Activated B cell treated with CpG ODN at 0.5 μM for 24 hours (primary cell): ENCODE measurements at regions of chr17 and their contacts with region 1.

Region 1: GRCh38 chr17:29640413-29640812 is 17.7 kb upstream of the CORO6 start:
- DNase-seq: no peak
- ATAC-seq: no peak
- H3K4me3 Mint-ChIP-seq: no peak overlapping the region
- H3K27ac Mint-ChIP-seq: peak overlapping the region; percentile 89
- H3K4me1 Mint-ChIP-seq: peaks cover 32% of the 10 kb centered on the region
- H3K27me3 Mint-ChIP-seq: no peaks in the 10 kb centered on the region
- CTCF ChIP-seq: no peak

Region 2: DNA sequence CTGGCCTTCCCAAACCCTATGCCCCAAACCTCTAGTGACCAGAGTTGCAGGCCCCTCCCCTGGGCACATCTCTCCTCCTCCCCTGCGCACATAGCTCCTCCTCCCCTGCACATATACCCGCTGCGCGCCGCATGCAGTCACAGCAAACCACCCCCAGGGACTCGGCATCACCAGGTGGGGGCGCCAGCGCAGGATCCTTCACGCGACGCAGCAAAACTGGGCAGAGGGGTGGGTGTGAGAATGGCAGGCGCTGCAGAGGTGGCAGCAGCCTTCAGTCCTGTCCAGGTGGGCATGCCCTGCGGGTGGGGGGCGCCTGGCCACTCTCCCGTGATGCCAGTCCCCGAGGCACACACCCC is 23.3 kb before region 1 on chr17:
- CTCF ChIA-PET with region 1: interaction called, 19 read pairs
- POLR2A ChIA-PET with region 1: interaction called, 11 read pairs
- intact Hi-C with region 1: loop called (anchors 2 kb)
- DNase-seq: peak; percentile 75
- ATAC-seq: peak; percentile 79
- H3K4me3 Mint-ChIP-seq: peak overlapping the region; percentile 83
- H3K27ac Mint-ChIP-seq: peak overlapping the region; percentile 72
- H3K4me1 Mint-ChIP-seq: peaks cover 46% of the 10 kb centered on the region
- H3K27me3 Mint-ChIP-seq: peaks cover 3% of the 10 kb centered on the region
- CTCF ChIP-seq: no peak

Region 3: GRCh38 chr17:29777663-29778062 is 137.2 kb after region 1 on chr17:
- CTCF ChIA-PET with region 1: interaction called, 173 read pairs
- POLR2A ChIA-PET with region 1: interaction called, 18 read pairs
- intact Hi-C with region 1: loop called (anchors 1 kb)
- DNase-seq: no peak
- ATAC-seq: no peak
- H3K4me3 Mint-ChIP-seq: no peak overlapping the region
- H3K27ac Mint-ChIP-seq: no peak overlapping the region
- H3K4me1 Mint-ChIP-seq: peaks cover 14% of the 10 kb centered on the region
- H3K27me3 Mint-ChIP-seq: no peaks in the 10 kb centered on the region
- CTCF ChIP-seq: no peak

Region 4: GRCh38 chr17:29807520-29808351 is 167.3 kb after region 1 on chr17:
- CTCF ChIA-PET with region 1: interaction called, 37 read pairs
- POLR2A ChIA-PET with region 1: interaction called, 3 read pairs
- intact Hi-C with region 1: loop called (anchors 1 kb)
- DNase-seq: peak; percentile 23
- ATAC-seq: peak; percentile 83
- H3K4me3 Mint-ChIP-seq: peak overlapping the region; percentile 49
- H3K27ac Mint-ChIP-seq: no peak overlapping the region
- H3K4me1 Mint-ChIP-seq: peaks cover 29% of the 10 kb centered on the region
- H3K27me3 Mint-ChIP-seq: no peaks in the 10 kb centered on the region
- CTCF ChIP-seq: peak; percentile 49

Region 5: DNA sequence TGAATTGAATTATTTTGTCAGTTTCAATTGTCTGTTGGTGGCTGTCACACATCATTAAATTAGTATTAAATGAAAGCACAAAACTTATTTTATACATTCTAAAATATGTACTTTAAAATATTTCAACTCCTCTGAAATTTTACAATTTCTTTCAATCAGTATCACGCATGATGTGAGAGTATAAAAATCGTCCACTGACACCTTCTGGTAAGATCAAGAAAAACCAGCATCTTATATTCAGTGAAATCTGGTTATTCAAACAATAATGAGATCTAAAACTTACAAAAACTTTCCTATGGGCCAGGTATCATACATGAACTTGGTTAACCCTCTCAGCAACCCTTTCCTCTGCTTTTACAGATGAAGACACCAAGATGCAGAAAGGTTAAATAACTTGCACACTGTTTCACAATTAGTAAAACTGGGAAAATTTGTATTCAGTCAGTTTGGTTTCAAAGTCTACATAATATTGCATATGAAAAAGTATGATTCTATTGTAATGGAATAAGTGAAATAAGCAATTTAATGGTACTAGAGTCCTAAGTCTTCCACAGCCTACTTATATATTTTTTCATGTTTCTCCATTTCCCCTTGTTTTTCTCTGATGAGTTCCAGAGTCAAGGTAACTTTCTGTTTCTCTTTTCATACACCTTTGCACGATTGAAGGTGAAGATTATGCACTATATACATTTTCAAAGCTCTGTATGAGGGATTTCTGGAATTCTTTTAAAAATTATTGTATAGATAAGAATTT is 359.8 kb after region 1 on chr17:
- CTCF ChIA-PET with region 1: no interaction called
- POLR2A ChIA-PET with region 1: no interaction called
- intact Hi-C with region 1: loop called (anchors 5 kb)
- DNase-seq: no peak
- ATAC-seq: no peak
- H3K4me3 Mint-ChIP-seq: no peak overlapping the region
- H3K27ac Mint-ChIP-seq: no peak overlapping the region
- H3K4me1 Mint-ChIP-seq: no peaks in the 10 kb centered on the region
- H3K27me3 Mint-ChIP-seq: no peaks in the 10 kb centered on the region
- CTCF ChIP-seq: no peak

Region 6: GRCh38 chr17:30093463-30094147 is 453.2 kb after region 1 on chr17:
- CTCF ChIA-PET with region 1: interaction called, 11 read pairs
- POLR2A ChIA-PET with region 1: no interaction called
- intact Hi-C with region 1: loop called (anchors 5 kb)
- DNase-seq: no peak
- ATAC-seq: peak; percentile 68
- H3K4me3 Mint-ChIP-seq: no peak overlapping the region
- H3K27ac Mint-ChIP-seq: no peak overlapping the region
- H3K4me1 Mint-ChIP-seq: peaks cover 10% of the 10 kb centered on the region
- H3K27me3 Mint-ChIP-seq: peaks cover 21% of the 10 kb centered on the region
- CTCF ChIP-seq: peak; percentile 64